Breast epithelium (tissue), 4 donors: ENCODE measurements at regions of chr12 and their contacts with region 1.

Region 1: GRCh38 chr12:24952389-24952788 is 3.5 kb upstream of the BCAT1 start:
- DNase-seq: no peak
- H3K4me3 ChIP-seq: no peak overlapping the region
- H3K27ac ChIP-seq: no peak overlapping the region
- H3K4me1 ChIP-seq: no peaks in the 10 kb centered on the region
- H3K27me3 ChIP-seq: no peaks in the 10 kb centered on the region
- CTCF ChIP-seq: no peak
- POLR2A ChIP-seq: no peak

Region 2: GRCh38 chr12:24903329-24904088 is 48.9 kb before region 1 on chr12:
- intact Hi-C with region 1: loop called (anchors 2 kb)
- DNase-seq: no peak
- H3K4me3 ChIP-seq: peak overlapping the region; percentile 57 to 66 (median 61)
- H3K27ac ChIP-seq: no peak overlapping the region
- H3K4me1 ChIP-seq: no peaks in the 10 kb centered on the region
- H3K27me3 ChIP-seq: peaks cover 0 to 23% of the 10 kb centered on the region in 2 donors
- CTCF ChIP-seq: no peak
- POLR2A ChIP-seq: no peak